ENCODE measurements at regions of chr14 and their contacts with region 1.

Region 1: GRCh38 chr14:50067723-50068495 is 48.5 kb downstream of the VCPKMT start:
- DNase-seq: no peak
- H3K4me3 ChIP-seq: no peak overlapping the region
- H3K4me3 Mint-ChIP-seq: no peak overlapping the region
- H3K27ac Mint-ChIP-seq: peak overlapping the region; percentile 78
- H3K4me1 ChIP-seq: peaks cover 55% of the 10 kb centered on the region
- H3K4me1 Mint-ChIP-seq: peaks cover 32% of the 10 kb centered on the region
- H3K27me3 ChIP-seq: no peaks in the 10 kb centered on the region
- H3K27me3 Mint-ChIP-seq: no peaks in the 10 kb centered on the region
- CTCF ChIP-seq: no peak

Region 2: GRCh38 chr14:50018201-50018932 is 49.5 kb before region 1 on chr14:
- CTCF ChIA-PET with region 1: interaction called, 5 read pairs
- POLR2A ChIA-PET with region 1: no interaction called
- intact Hi-C with region 1: loop called (anchors 2 kb)
- DNase-seq: peak; percentile 59 to 73
- H3K4me3 ChIP-seq: no peak overlapping the region
- H3K4me3 Mint-ChIP-seq: no peak overlapping the region
- H3K27ac Mint-ChIP-seq: peak overlapping the region; percentile 55
- H3K4me1 ChIP-seq: peaks cover 38% of the 10 kb centered on the region
- H3K4me1 Mint-ChIP-seq: peaks cover 22% of the 10 kb centered on the region
- H3K27me3 ChIP-seq: no peaks in the 10 kb centered on the region
- H3K27me3 Mint-ChIP-seq: no peaks in the 10 kb centered on the region
- CTCF ChIP-seq: no peak

Region 3: GRCh38 chr14:50099335-50099734 is 31.4 kb after region 1 on chr14:
- CTCF ChIA-PET with region 1: interaction called, 3 read pairs
- POLR2A ChIA-PET with region 1: no interaction called
- intact Hi-C with region 1: loop called (anchors 1 kb)
- DNase-seq: no peak
- H3K4me3 ChIP-seq: no peak overlapping the region
- H3K4me3 Mint-ChIP-seq: no peak overlapping the region
- H3K27ac Mint-ChIP-seq: no peak overlapping the region
- H3K4me1 ChIP-seq: peaks cover 25% of the 10 kb centered on the region
- H3K4me1 Mint-ChIP-seq: peaks cover 6% of the 10 kb centered on the region
- H3K27me3 ChIP-seq: no peaks in the 10 kb centered on the region
- H3K27me3 Mint-ChIP-seq: no peaks in the 10 kb centered on the region
- CTCF ChIP-seq: no peak

Measured in Caco-2 (cell line).